Activated CD4-positive, alpha-beta memory T cell treated with anti-CD3 and anti-CD28 coated beads for 36 hours (primary cell): ENCODE measurements at regions of chr12 and their contacts with region 1.

Region 1: GRCh38 chr12:122895705-122896636 is at the start of gene VPS37B:
- DNase-seq: peak; percentile 93
- H3K4me3 Mint-ChIP-seq: peak within 1 kb of the TSS; percentile 79
- H3K27ac Mint-ChIP-seq: peak within 1 kb of the TSS; percentile 79
- H3K4me1 Mint-ChIP-seq: peaks cover 77% of the 10 kb centered on the region
- H3K27me3 Mint-ChIP-seq: peaks cover 3% of the 10 kb centered on the region
- total RNA-seq, gene VPS37B: 10.0 to 10.4 TPM

Region 2: GRCh38 chr12:122860346-122861090 is 35.5 kb before region 1 on chr12:
- CTCF ChIA-PET with region 1: no interaction called
- POLR2A ChIA-PET with region 1: no interaction called
- intact Hi-C with region 1: loop called (anchors 1 kb)
- DNase-seq: peak; percentile 88
- H3K4me3 Mint-ChIP-seq: no peak overlapping the region
- H3K27ac Mint-ChIP-seq: no peak overlapping the region
- H3K4me1 Mint-ChIP-seq: no peaks in the 10 kb centered on the region
- H3K27me3 Mint-ChIP-seq: no peaks in the 10 kb centered on the region

Region 3: GRCh38 chr12:122880668-122881067 is 15.3 kb before region 1 on chr12:
- CTCF ChIA-PET with region 1: interaction called, 25 read pairs
- POLR2A ChIA-PET with region 1: interaction called, 7 read pairs
- intact Hi-C with region 1: loop called (anchors 1 kb)
- DNase-seq: peak; percentile 49
- H3K4me3 Mint-ChIP-seq: no peak overlapping the region
- H3K27ac Mint-ChIP-seq: no peak overlapping the region
- H3K4me1 Mint-ChIP-seq: peaks cover 71% of the 10 kb centered on the region
- H3K27me3 Mint-ChIP-seq: peaks cover 26% of the 10 kb centered on the region

Region 4: DNA sequence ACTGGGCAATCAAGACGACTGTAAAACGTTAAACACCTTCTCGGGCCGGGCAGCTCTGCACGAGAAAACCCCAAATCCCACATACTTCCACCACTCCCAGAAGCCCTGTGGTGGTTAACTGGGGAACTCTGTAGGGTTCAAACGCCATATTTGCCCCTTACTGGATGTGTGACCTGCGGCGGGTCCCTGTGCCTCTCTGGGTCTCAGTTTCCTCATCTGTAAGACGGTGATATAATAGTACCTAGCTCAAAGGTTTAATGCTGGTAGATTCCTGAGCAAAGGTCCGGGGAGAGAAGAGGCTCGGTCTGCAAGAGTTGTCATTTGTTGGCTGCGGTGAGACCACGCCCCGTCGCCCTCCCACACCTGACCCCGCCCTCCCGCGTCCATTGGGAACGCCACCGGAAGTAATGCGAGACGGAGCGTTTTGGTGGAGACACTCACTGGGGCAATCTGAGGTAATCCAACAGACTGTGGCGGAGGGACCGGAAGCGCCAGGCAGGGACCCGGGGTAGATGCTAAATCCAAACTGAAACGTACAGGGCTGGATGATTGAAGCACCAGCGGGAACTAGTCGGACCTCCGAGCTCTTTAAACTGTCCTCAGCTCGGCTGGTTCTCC is 78.4 kb after region 1 on chr12:
- CTCF ChIA-PET with region 1: no interaction called
- POLR2A ChIA-PET with region 1: no interaction called
- intact Hi-C with region 1: loop called (anchors 2 kb)
- DNase-seq: peak; percentile 100
- H3K4me3 Mint-ChIP-seq: peak overlapping the region; percentile 98
- H3K27ac Mint-ChIP-seq: peak overlapping the region; percentile 99
- H3K4me1 Mint-ChIP-seq: peaks cover 25% of the 10 kb centered on the region
- H3K27me3 Mint-ChIP-seq: no peaks in the 10 kb centered on the region